Activated CD8-positive, alpha-beta memory T cell treated with anti-CD3 and anti-CD28 coated beads, Interleukin-2, amount 10 ng/mL, durations not matched to agents 7 days and 5 days (primary cell): ENCODE measurements at regions of chr3 and their contacts with region 1.

Region 1: DNA sequence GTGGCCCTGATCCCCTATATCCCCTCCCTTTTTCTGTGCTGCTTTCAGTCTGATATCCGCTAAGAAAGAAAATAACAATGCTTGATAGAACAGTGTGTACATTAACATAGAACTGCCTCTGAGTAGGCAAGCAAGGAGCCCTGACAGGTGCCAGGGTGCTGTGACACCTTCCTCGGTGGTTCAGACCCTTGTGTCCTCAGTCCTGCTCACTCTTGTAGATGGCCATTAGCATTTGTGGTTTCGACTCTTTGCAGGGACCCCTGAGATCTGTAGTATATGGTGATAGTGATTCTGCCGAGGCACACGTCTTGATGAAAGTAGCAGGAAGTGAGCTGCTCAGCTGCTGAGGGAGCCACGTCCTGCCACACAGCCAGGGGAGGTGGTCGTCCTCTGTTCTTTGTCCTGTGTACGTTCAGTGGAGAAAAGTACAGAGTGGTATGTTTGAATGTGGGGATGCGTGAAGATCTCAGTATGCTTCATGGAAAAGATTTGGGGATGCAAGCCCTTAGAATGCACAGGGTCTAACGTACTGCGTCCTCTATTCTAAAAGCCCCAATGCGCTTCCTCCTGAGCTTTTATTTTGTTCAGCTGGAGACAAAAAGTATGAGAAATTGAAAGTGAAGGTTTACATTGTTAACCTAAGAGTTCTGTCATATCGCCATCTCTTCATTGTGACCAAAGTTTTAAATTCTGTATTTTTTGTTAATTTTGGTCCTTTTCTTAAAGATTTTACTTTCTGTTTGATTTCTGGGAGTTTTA is 35.4 kb downstream of the PXYLP1 start:
- DNase-seq: peak; percentile 75
- ATAC-seq: peak; percentile 90
- H3K4me3 Mint-ChIP-seq: peak overlapping the region; percentile 77
- H3K27ac Mint-ChIP-seq: peak overlapping the region; percentile 93
- H3K4me1 Mint-ChIP-seq: peaks cover 26% of the 10 kb centered on the region
- H3K27me3 Mint-ChIP-seq: no peaks in the 10 kb centered on the region

Region 2: DNA sequence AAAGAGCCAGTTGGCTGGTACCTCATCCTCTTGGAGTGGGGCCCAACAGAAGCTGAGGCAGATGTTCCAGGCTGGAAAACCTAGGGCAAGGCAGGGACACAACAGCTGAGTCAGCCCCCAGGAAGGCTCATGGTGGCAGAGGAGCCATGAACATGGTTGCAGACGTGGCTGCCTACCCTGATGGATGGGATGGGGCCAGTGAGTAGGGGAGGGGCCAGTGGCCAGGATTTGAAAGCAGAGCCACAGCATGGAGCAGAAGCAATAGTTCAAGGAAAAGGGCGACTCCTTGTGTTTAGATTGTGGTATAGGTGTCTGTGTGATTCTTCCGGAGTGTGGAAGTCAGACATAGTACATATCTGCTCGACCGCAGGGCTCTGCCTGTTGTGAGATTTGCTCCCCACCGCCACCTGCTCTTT is 11.1 kb before region 1 on chr3:
- CTCF ChIA-PET with region 1: interaction called, 12 read pairs
- DNase-seq: peak; percentile 45
- ATAC-seq: peak; percentile 87
- H3K4me3 Mint-ChIP-seq: no peak overlapping the region
- H3K27ac Mint-ChIP-seq: no peak overlapping the region
- H3K4me1 Mint-ChIP-seq: peaks cover 28% of the 10 kb centered on the region
- H3K27me3 Mint-ChIP-seq: no peaks in the 10 kb centered on the region

Region 3: GRCh38 chr3:141279077-141279967 is 12.3 kb after region 1 on chr3:
- CTCF ChIA-PET with region 1: interaction called, 14 read pairs
- DNase-seq: no peak
- ATAC-seq: peak; percentile 59
- H3K4me3 Mint-ChIP-seq: no peak overlapping the region
- H3K27ac Mint-ChIP-seq: peak overlapping the region; percentile 26
- H3K4me1 Mint-ChIP-seq: peaks cover 27% of the 10 kb centered on the region
- H3K27me3 Mint-ChIP-seq: no peaks in the 10 kb centered on the region

Region 4: DNA sequence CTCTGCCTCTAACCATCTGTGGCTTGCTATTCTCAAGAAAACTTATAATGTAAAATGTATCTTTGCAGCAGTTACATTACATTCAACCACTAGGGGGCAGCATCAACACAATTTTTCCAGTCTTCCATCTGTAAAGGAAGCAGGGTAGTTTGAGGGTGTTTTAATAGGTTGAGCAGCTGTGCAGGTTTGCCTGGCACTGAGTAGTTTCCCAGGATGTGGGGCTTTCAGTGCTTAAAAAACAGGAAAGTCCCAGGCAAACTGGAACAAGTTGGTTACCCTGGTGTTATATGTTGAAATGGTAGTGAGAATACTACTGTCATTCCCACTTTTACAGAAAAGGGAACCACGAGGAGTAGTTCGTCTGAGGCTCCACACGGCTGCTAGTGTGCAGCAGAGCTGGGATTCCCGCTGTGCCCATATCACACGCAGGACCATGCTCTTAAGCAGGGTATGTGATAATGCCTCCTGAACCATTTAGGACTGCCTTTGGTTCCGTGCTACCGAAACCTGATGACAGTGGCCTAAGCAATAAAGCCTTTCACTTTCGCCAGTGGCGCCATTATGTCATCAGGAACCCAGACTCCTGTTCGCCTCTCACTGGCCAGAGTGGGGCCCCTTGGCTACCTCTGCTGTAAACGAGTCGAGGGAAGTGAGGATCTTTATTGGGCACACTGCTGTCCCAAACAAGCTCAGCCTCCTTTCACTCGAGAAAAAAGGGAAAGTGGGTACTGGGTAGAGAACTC is 36.7 kb after region 1 on chr3:
- CTCF ChIA-PET with region 1: interaction called, 17 read pairs
- DNase-seq: peak; percentile 73
- ATAC-seq: peak; percentile 73
- H3K4me3 Mint-ChIP-seq: no peak overlapping the region
- H3K27ac Mint-ChIP-seq: no peak overlapping the region
- H3K4me1 Mint-ChIP-seq: peaks cover 23% of the 10 kb centered on the region
- H3K27me3 Mint-ChIP-seq: no peaks in the 10 kb centered on the region

Region 5: GRCh38 chr3:141489203-141489602 is 222.2 kb after region 1 on chr3:
- CTCF ChIA-PET with region 1: no interaction called
- DNase-seq: peak; percentile 59
- ATAC-seq: no peak
- H3K4me3 Mint-ChIP-seq: peak overlapping the region; percentile 83
- H3K27ac Mint-ChIP-seq: peak overlapping the region; percentile 64
- H3K4me1 Mint-ChIP-seq: peaks cover 79% of the 10 kb centered on the region
- H3K27me3 Mint-ChIP-seq: no peaks in the 10 kb centered on the region